ENCODE measurements at regions of chr12 and their contacts with region 1.

Region 1: GRCh38 chr12:15575671-15576541 is 213.3 kb downstream of the EPS8 start:
- DNase-seq: no peak
- H3K4me3 Mint-ChIP-seq: no peak overlapping the region
- H3K27ac Mint-ChIP-seq: peak overlapping the region; percentile 46
- H3K4me1 Mint-ChIP-seq: peaks cover 48% of the 10 kb centered on the region
- H3K27me3 Mint-ChIP-seq: no peaks in the 10 kb centered on the region

Region 2: DNA sequence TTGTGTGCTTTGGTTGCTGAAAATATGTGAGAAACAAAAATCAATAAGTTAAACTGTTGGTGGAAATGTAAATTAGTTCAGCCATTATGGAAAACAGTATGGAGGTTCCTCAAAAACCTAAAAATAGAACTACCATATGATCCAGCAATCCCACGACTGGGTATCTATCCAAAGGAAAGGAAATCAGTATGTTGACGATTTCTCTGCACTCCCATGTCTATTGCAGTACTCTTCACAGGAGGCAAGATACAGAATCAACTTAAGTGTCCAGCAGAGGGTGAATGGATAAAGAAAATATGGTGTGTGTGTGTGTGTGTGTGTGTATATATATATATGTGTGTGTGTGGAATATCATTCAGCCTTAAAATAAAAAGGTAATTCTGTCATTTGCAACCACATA is 94.1 kb before region 1 on chr12:
- intact Hi-C with region 1: no loop called
- DNase-seq: no peak
- H3K4me3 Mint-ChIP-seq: no peak overlapping the region
- H3K27ac Mint-ChIP-seq: no peak overlapping the region
- H3K4me1 Mint-ChIP-seq: peaks cover 3% of the 10 kb centered on the region
- H3K27me3 Mint-ChIP-seq: peaks cover 15% of the 10 kb centered on the region

Region 3: DNA sequence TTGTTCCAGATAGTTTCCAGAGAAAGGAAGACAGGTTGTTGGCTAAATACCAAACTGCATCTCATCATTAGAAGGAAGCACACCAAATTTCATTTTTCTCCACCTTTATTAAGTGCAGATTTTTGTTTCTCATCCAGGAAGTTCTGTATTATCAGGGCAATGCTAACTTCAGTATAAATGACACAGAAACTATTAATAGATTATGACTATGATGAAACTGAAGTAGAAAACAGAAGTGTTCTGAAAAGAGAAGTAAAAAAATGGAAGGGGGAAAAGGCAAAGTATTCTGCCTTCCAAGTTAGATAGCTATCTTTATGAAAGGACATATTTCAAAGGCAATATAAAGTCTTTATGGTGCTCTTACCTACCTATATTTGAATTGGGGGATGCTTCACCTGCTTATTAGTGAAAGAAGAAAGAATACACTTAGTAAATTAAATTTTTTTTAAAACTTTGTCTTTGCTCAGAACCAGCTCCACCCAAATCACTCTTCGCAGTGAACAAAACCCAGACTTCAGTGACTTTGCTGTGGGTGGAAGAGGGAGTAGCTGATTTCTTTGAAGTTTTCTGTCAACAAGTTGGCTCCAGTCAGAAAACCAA is 29.7 kb before region 1 on chr12:
- intact Hi-C with region 1: no loop called
- DNase-seq: no peak
- H3K4me3 Mint-ChIP-seq: no peak overlapping the region
- H3K27ac Mint-ChIP-seq: peak overlapping the region; percentile 18
- H3K4me1 Mint-ChIP-seq: peaks cover 28% of the 10 kb centered on the region
- H3K27me3 Mint-ChIP-seq: no peaks in the 10 kb centered on the region

Region 4: GRCh38 chr12:15563663-15564062 is 12.2 kb before region 1 on chr12:
- intact Hi-C with region 1: loop called (anchors 1 kb)
- DNase-seq: no peak
- H3K4me3 Mint-ChIP-seq: peak overlapping the region; percentile 83
- H3K27ac Mint-ChIP-seq: peak overlapping the region; percentile 91
- H3K4me1 Mint-ChIP-seq: peaks cover 65% of the 10 kb centered on the region
- H3K27me3 Mint-ChIP-seq: no peaks in the 10 kb centered on the region

Measured in activated T-helper 2 cell treated with anti-CD3 and anti-CD28 coated beads, Interferon-gamma antibody, Interleukin-2, Interleukin-4, amounts not matched to agents 10 μg/mL and 5 μg/mL and 100 μg/mL, durations not matched to agents 14 hours and 24 hours and 36 hours (primary cell).